GM12878 (cell line): ENCODE measurements at regions of chr12 and their contacts with region 1.

Region 1: DNA sequence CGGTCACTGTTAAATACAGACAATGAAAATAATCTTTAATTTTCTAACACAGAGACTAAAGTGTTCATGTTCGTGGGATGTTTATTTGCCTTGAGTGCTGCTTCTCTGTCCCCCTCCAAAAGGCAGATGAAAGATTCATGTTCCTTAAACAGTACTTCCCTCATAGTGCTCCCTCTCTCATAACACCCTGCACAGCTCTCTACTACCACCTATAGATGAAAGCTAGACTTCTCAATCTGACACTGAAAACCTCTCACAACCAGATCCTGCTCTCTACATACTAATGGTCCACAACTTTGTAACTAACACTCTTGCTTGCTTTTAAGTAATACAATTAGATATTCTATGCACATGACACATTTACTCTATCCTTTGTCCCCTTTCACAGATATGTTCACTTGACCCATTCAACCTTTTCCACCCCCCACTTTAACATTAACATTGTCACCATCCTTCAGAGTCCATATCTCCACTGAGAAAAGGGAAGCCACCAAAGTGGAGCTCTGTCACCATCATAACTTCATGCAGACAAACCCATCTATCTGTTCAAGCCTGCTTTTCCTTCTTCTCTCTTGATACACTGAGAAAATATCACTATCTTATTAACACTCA is 266.4 kb upstream of the USP15 start:
- DNase-seq: no peak
- ATAC-seq: peak; percentile 85
- H3K4me3 ChIP-seq: no peak overlapping the region
- H3K27ac ChIP-seq: no peak overlapping the region
- H3K4me1 ChIP-seq: no peaks in the 10 kb centered on the region
- H3K27me3 ChIP-seq: no peaks in the 10 kb centered on the region
- CTCF ChIP-seq: peak; percentile 56 to 64 (median 57)
- EP300 ChIP-seq: no peak
- POLR2A ChIP-seq: no peak
- RAD21 ChIP-seq: peak; percentile 70

Region 2: DNA sequence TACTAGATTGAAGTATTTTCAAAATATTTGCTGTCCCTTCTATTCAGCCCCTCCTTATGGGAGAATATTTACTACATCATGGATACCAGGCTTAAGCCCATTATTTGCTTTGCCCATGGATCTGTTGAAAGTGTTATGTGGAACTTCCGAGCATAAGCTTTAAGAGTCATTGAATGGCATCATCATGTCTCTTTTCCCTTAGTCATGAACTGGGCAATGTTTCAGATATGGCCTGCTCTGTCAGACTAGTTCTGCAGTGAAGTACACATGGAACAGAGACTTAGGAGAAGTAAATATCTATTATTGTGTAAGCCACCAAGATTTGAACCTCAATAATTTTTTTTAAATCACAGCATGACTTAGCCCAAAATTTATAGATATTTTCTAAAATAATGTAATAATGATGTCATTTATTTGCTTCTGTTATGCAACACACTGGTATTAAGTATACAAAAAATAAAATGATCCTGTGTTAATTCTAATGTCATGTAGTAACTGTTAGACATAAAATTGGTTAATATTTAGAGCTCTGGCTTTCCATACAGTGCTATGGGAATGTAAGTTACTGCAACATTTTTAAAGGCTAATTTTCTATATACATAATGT is 1300.7 kb before region 1 on chr12:
- CTCF ChIA-PET with region 1: no interaction called
- POLR2A ChIA-PET with region 1: no interaction called
- RAD21 ChIA-PET with region 1: no interaction called
- SMC1A ChIA-PET with region 1: no interaction called
- in situ Hi-C with region 1: no loop called
- intact Hi-C with region 1: loop called (anchors 10 kb)
- DNase-seq: no peak
- ATAC-seq: no peak
- H3K4me3 ChIP-seq: no peak overlapping the region
- H3K27ac ChIP-seq: no peak overlapping the region
- H3K4me1 ChIP-seq: no peaks in the 10 kb centered on the region
- H3K27me3 ChIP-seq: no peaks in the 10 kb centered on the region
- CTCF ChIP-seq: no peak
- EP300 ChIP-seq: no peak
- POLR2A ChIP-seq: no peak
- RAD21 ChIP-seq: no peak

Region 3: DNA sequence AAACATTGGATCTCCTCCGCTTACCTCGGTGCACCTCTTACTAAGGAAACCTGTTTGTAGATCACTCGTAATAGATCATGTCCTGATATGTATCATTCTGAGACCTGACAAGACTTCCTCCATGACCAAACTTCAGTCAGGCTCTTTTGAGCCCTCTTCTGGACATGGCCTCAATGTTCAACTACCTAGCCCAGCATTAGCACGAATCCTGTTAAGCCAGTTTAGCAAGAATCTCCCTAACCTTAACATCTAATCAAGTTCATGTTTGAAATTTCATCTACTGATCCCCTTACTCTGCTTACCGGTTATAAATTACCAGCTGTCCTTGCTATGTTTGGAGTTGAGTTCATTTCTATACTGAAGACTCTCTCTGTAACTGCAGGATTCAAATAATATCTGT is 447.5 kb before region 1 on chr12:
- CTCF ChIA-PET with region 1: no interaction called
- POLR2A ChIA-PET with region 1: no interaction called
- RAD21 ChIA-PET with region 1: no interaction called
- SMC1A ChIA-PET with region 1: no interaction called
- in situ Hi-C with region 1: no loop called
- intact Hi-C with region 1: loop called (anchors 10 kb)
- DNase-seq: no peak
- ATAC-seq: no peak
- H3K4me3 ChIP-seq: no peak overlapping the region
- H3K27ac ChIP-seq: no peak overlapping the region
- H3K4me1 ChIP-seq: no peaks in the 10 kb centered on the region
- H3K27me3 ChIP-seq: no peaks in the 10 kb centered on the region
- CTCF ChIP-seq: no peak
- EP300 ChIP-seq: no peak
- POLR2A ChIP-seq: no peak
- RAD21 ChIP-seq: no peak; the same call in 1 of the 2 replicates

Region 4: GRCh38 chr12:61654698-61655097 is 339.1 kb before region 1 on chr12:
- CTCF ChIA-PET with region 1: interaction called, 3 read pairs
- POLR2A ChIA-PET with region 1: no interaction called
- RAD21 ChIA-PET with region 1: no interaction called
- SMC1A ChIA-PET with region 1: no interaction called
- in situ Hi-C with region 1: no loop called
- intact Hi-C with region 1: loop called (anchors 5 kb)
- DNase-seq: no peak
- ATAC-seq: no peak
- H3K4me3 ChIP-seq: no peak overlapping the region
- H3K27ac ChIP-seq: no peak overlapping the region
- H3K4me1 ChIP-seq: no peaks in the 10 kb centered on the region
- H3K27me3 ChIP-seq: no peaks in the 10 kb centered on the region
- CTCF ChIP-seq: no peak; a peak in 1 of 6 replicates
- EP300 ChIP-seq: no peak
- POLR2A ChIP-seq: no peak
- RAD21 ChIP-seq: no peak

Region 5: GRCh38 chr12:61916831-61917230 is 77.0 kb before region 1 on chr12:
- CTCF ChIA-PET with region 1: no interaction called
- POLR2A ChIA-PET with region 1: no interaction called
- RAD21 ChIA-PET with region 1: no interaction called
- SMC1A ChIA-PET with region 1: no interaction called
- in situ Hi-C with region 1: no loop called
- intact Hi-C with region 1: no loop called
- DNase-seq: no peak
- ATAC-seq: no peak
- H3K4me3 ChIP-seq: no peak overlapping the region
- H3K27ac ChIP-seq: no peak overlapping the region
- H3K4me1 ChIP-seq: no peaks in the 10 kb centered on the region
- H3K27me3 ChIP-seq: no peaks in the 10 kb centered on the region
- CTCF ChIP-seq: no peak
- EP300 ChIP-seq: no peak
- POLR2A ChIP-seq: no peak
- RAD21 ChIP-seq: no peak

Region 6: GRCh38 chr12:62098132-62098531 is 104.3 kb after region 1 on chr12:
- CTCF ChIA-PET with region 1: no interaction called
- POLR2A ChIA-PET with region 1: no interaction called
- RAD21 ChIA-PET with region 1: no interaction called
- SMC1A ChIA-PET with region 1: no interaction called
- in situ Hi-C with region 1: no loop called
- intact Hi-C with region 1: no loop called
- DNase-seq: no peak
- ATAC-seq: no peak
- H3K4me3 ChIP-seq: no peak overlapping the region
- H3K27ac ChIP-seq: no peak overlapping the region
- H3K4me1 ChIP-seq: no peaks in the 10 kb centered on the region
- H3K27me3 ChIP-seq: no peaks in the 10 kb centered on the region
- CTCF ChIP-seq: no peak
- EP300 ChIP-seq: no peak
- POLR2A ChIP-seq: no peak
- RAD21 ChIP-seq: no peak